Heart left ventricle (tissue), 16 donors: ENCODE measurements at regions of chr5 and their contacts with region 1.

Region 1: DNA sequence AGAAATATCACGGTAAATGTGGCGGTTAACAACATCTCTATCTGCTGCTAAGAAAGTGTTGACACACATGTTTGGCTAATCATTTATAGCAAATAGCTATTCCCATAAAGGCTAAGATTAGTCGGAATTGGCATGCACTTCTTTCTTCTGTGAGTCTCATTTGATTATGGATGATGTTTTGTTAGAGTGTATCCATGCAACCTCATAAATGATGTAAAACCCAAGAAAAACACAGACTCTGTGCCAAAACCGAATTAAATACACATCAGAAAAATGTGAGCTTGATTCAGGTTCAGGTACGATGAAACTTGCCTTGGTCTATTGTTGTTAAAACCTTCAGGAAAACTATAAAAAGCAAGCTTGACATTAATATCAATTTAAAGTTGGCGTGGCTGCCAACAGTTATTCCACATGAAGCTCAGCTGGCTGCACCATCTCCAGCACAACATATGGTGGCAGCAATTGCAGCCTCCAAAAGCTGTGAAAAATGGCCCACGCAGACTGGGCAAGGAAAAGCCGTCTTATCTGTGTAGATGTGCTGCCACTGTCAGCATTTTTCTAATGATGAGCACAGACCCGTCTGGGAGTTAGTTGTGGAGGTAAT is 41.1 kb upstream of the ICE1 start:
- DNase-seq: no peak
- ATAC-seq: peak in 1 of 4 donors; percentile 18
- H3K4me3 ChIP-seq: no peak overlapping the region
- H3K27ac ChIP-seq: no peak overlapping the region
- H3K4me1 ChIP-seq: peaks cover 0 to 5% (median 0%) of the 10 kb centered on the region in 12 donors
- H3K27me3 ChIP-seq: no peaks in the 10 kb centered on the region
- CTCF ChIP-seq: no peak
- POLR2A ChIP-seq: no peak

Region 2: GRCh38 chr5:5270958-5271605 is 110.3 kb before region 1 on chr5:
- intact Hi-C with region 1: loop called in 1 of 10 experiments (anchors 10 kb)
- DNase-seq: peak; percentile 36 to 79 (median 53)
- ATAC-seq: peak in 3 of 4 donors; percentile 86 to 96 (median 93)
- H3K4me3 ChIP-seq: peak overlapping the region in 7 of 12 donors; percentile 4 to 37 (median 24)
- H3K27ac ChIP-seq: no peak overlapping the region
- H3K4me1 ChIP-seq: peaks cover 0 to 12% (median 4%) of the 10 kb centered on the region in 12 donors
- H3K27me3 ChIP-seq: peaks cover 0 to 4% (median 0%) of the 10 kb centered on the region in 9 donors
- CTCF ChIP-seq: no peak
- POLR2A ChIP-seq: no peak